ENCODE measurements at regions of chr13 and their contacts with region 1.

Region 1: GRCh38 chr13:29935309-29935981 is 85.0 kb upstream of the UBL3 start:
- DNase-seq: peak; percentile 50 to 93 (median 73)
- ATAC-seq: peak; percentile 92
- H3K4me3 ChIP-seq: peak overlapping the region; percentile 64
- H3K4me3 Mint-ChIP-seq: peak overlapping the region; percentile 90
- H3K27ac ChIP-seq: peak overlapping the region; percentile 73 to 82
- H3K27ac Mint-ChIP-seq: peak overlapping the region; percentile 93
- H3K4me1 ChIP-seq: peaks cover 64% of the 10 kb centered on the region
- H3K4me1 Mint-ChIP-seq: peaks cover 65% of the 10 kb centered on the region
- H3K27me3 ChIP-seq: no peaks in the 10 kb centered on the region
- H3K27me3 Mint-ChIP-seq: no peaks in the 10 kb centered on the region
- CTCF ChIP-seq: no peak

Region 2: DNA sequence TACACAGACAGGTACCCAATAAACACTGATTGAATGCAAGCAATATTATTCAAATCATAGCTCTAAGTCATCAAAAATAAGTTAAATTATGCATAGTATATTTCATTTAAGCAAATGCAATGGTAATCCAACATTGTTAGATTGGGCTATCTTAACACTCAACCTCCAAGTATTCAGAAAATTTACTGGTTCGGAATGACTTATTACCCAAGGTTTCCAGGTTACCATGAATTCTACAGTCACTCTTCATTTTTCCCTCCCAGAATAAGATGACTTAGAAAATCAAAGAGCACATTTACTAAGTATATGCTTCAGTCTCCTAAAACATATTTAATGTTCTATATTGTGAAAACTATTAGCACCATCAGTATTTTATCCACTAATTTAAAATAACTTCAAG is 91.0 kb before region 1 on chr13:
- CTCF ChIA-PET with region 1: interaction called, 4 read pairs
- POLR2A ChIA-PET with region 1: interaction called, 184 read pairs
- intact Hi-C with region 1: loop called in 1 of 2 experiments (anchors 5 kb)
- DNase-seq: no peak
- ATAC-seq: no peak
- H3K4me3 ChIP-seq: no peak overlapping the region
- H3K4me3 Mint-ChIP-seq: peak overlapping the region; percentile 1
- H3K27ac ChIP-seq: no peak overlapping the region
- H3K27ac Mint-ChIP-seq: no peak overlapping the region
- H3K4me1 ChIP-seq: peaks cover 4% of the 10 kb centered on the region
- H3K4me1 Mint-ChIP-seq: peaks cover 66% of the 10 kb centered on the region
- H3K27me3 ChIP-seq: no peaks in the 10 kb centered on the region
- H3K27me3 Mint-ChIP-seq: no peaks in the 10 kb centered on the region
- CTCF ChIP-seq: no peak

Region 3: DNA sequence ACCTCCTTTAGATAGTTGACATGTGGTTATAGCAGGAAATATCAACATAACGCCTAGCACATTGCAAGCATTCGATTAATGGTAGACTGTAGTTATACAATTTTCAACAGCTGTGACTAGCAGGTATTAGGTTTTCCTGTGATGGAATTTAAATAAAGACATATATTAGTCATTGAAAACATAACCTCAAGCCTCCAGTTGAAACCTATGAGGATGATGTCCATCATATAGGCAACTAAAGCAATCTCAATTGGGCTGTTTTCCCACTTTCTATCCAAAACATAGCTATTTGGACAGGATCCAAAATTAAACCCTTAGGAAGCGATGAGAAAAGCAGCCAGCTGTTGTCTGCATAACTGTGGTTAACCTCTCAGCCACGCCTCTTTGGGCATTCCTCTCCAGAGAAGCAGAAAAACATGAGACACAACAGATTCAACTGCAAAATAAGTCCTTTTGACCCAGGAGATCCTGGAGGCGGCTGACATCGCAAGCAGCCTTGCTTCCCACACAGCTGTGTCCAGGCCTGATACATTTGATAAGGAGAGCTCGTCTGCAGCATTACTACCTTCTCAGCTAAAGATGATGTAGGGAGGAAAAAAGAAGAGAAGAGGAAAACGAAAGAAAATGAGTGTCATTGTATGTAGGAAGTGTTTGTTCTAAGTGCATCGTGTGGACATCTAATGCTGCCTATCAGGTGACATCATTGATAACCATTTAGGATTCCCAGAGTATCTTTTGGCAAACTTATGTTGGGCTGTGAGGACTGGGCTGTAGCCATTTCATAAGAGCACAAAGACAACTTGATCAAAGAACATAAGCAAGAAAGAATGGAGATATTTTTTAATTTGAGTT is 33.1 kb before region 1 on chr13:
- CTCF ChIA-PET with region 1: interaction called, 5 read pairs
- POLR2A ChIA-PET with region 1: interaction called, 19 read pairs
- intact Hi-C with region 1: no loop called
- DNase-seq: peak in 11 of 14 experiments; percentile 3 to 74 (median 17)
- ATAC-seq: peak; percentile 69
- H3K4me3 ChIP-seq: peak overlapping the region; percentile 45
- H3K4me3 Mint-ChIP-seq: peak overlapping the region; percentile 84
- H3K27ac ChIP-seq: peak overlapping the region in 1 of 2 donors; percentile 37
- H3K27ac Mint-ChIP-seq: peak overlapping the region; percentile 60
- H3K4me1 ChIP-seq: peaks cover 20% of the 10 kb centered on the region
- H3K4me1 Mint-ChIP-seq: peaks cover 27% of the 10 kb centered on the region
- H3K27me3 ChIP-seq: no peaks in the 10 kb centered on the region
- H3K27me3 Mint-ChIP-seq: no peaks in the 10 kb centered on the region
- CTCF ChIP-seq: no peak

Region 4: GRCh38 chr13:29946093-29946492 is 10.6 kb after region 1 on chr13:
- CTCF ChIA-PET with region 1: no interaction called
- POLR2A ChIA-PET with region 1: interaction called, 160 read pairs
- intact Hi-C with region 1: no loop called
- DNase-seq: no peak
- ATAC-seq: no peak
- H3K4me3 ChIP-seq: no peak overlapping the region
- H3K4me3 Mint-ChIP-seq: no peak overlapping the region
- H3K27ac ChIP-seq: no peak overlapping the region
- H3K27ac Mint-ChIP-seq: no peak overlapping the region
- H3K4me1 ChIP-seq: peaks cover 11% of the 10 kb centered on the region
- H3K4me1 Mint-ChIP-seq: peaks cover 28% of the 10 kb centered on the region
- H3K27me3 ChIP-seq: no peaks in the 10 kb centered on the region
- H3K27me3 Mint-ChIP-seq: no peaks in the 10 kb centered on the region
- CTCF ChIP-seq: no peak

Region 5: DNA sequence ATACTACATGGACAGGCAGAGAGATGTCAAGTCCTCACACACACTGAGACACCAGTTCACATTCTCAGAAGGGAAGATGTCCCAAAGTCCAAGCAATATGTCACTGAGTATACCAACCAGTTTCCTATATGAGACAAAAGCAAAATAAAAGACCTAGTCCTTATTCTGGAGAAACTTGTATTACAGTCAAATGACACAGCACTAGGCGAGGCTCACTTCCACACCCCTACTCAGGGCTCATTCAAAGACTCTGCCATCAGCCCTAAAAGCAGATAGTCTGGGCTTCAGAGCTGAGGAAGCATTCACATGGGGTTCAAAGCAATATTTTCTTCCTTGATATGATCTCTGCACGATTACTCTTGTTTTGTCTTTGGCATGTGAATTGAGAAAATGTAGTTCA is 44.9 kb after region 1 on chr13:
- CTCF ChIA-PET with region 1: no interaction called
- POLR2A ChIA-PET with region 1: no interaction called
- intact Hi-C with region 1: loop called in 1 of 2 experiments (anchors 5 kb)
- DNase-seq: no peak
- ATAC-seq: no peak
- H3K4me3 ChIP-seq: no peak overlapping the region
- H3K4me3 Mint-ChIP-seq: no peak overlapping the region
- H3K27ac ChIP-seq: no peak overlapping the region
- H3K27ac Mint-ChIP-seq: no peak overlapping the region
- H3K4me1 ChIP-seq: no peaks in the 10 kb centered on the region
- H3K4me1 Mint-ChIP-seq: no peaks in the 10 kb centered on the region
- H3K27me3 ChIP-seq: no peaks in the 10 kb centered on the region
- H3K27me3 Mint-ChIP-seq: no peaks in the 10 kb centered on the region
- CTCF ChIP-seq: no peak

Region 6: DNA sequence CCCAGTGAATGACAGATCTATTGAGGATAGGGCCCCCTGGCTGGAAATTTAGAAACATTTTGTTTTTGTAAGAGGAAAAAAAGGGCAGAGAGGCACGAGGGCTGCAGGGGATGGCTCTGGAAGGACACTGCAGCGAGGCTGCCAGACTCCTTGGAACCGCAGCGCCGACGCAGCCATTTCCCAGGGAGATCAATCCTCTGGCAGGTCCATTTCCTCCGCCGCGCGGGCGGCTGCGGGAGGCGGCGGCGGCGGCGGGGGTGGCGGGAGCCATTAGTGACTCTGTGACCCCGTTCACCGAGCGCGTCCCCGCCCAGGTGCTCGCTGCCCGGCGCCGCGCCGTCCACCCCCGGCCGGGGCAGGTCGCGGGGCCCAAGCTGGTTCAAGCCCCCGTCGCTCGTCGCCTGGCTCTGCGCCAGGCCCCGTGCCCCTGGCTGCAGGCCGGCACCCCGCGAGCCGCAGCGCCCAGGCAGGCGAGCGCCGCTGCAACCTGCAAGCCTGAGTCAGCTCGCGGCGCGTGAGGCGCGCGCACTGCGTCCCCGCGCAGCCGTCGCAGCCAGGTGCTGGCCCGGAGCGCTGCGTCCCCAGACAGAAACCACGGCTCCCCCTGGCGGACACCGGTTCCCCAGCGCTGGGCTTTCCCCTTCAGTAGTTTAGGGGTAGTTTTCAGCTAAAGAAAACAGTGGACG is 179.3 kb after region 1 on chr13:
- CTCF ChIA-PET with region 1: interaction called, 11 read pairs
- POLR2A ChIA-PET with region 1: interaction called, 31 read pairs
- intact Hi-C with region 1: loop called (anchors 1 to 2 kb)
- DNase-seq: peak; percentile 85 to 97 (median 95)
- ATAC-seq: peak; percentile 88
- H3K4me3 ChIP-seq: peak overlapping the region; percentile 53
- H3K4me3 Mint-ChIP-seq: peak overlapping the region; percentile 91
- H3K27ac ChIP-seq: no peak overlapping the region
- H3K27ac Mint-ChIP-seq: peak overlapping the region; percentile 78
- H3K4me1 ChIP-seq: peaks cover 29% of the 10 kb centered on the region
- H3K4me1 Mint-ChIP-seq: peaks cover 44% of the 10 kb centered on the region
- H3K27me3 ChIP-seq: no peaks in the 10 kb centered on the region
- H3K27me3 Mint-ChIP-seq: no peaks in the 10 kb centered on the region
- CTCF ChIP-seq: peak; percentile 86